Cardiac septum (tissue), 1 donor: ENCODE measurements at regions of chr14 and their contacts with region 1.

Region 1: DNA sequence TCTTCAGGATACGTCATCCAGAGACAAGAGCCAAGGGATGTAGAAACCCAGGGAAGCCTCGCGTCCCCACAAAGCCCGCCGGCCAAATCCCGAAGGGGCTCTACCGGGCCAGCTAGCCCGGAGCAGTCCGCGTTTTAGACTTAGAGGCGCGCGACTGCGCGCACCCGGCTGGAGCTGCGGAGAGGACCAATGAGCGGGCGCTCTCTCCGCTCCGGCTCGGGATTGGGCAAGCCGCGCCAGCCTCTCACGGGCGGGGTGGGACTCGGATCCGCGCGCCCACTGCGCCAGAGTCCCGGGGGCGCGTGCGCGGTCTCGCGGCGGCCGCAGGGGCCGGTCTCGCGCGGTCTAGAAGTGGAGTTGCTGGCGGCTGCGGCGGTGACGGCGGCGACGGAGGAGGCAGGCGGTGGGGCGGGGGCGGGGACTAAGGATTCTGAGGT is 239 bp upstream of the PALS1 start:
- DNase-seq: peak; percentile 97

Region 2: DNA sequence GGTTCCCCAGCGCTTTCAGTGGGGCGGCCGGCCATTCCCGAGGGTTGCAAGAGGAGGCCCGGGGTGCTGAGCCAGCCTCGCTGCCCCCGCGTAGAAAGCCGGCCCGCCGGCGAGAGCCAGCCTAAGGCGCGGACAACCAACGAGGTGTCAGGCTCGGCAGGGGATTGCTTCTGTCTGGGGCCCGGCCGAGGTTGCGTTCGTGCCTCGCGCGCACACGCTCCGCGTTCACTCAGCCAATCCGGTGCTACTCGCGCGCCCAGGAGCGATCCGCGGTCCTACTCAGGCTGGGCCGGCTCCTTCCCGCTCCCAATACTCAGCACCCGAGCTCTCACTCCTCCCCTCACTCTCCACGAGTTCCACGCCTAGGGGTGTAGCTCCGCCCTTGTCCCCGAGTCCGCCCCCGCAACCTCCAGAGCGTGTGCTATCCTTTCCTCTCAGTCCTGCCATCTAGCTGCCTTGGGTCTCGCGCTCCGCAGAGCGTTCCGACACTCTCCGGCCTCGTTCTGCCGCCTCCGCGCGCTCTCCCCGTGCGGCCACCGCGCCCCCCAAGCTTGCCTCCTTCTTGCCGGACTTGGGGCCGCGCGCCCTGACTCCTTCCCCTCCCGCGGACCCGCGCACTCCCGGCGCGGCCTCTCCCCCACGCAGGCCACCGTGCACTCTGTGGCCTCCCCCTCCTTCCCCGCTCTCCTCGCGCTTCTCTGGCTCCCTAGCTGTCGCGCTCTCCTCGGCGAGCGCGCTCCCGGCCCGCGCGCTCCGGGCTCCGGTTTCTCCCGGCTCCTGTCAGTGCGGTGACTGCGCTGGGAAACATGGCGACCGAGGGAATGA is 733.1 kb before region 1 on chr14 and contains the start of gene GPHN:
- intact Hi-C with region 1: loop called (anchors 10 kb)
- DNase-seq: peak; percentile 97
- total RNA-seq, gene GPHN: 27.7 TPM

Region 3: DNA sequence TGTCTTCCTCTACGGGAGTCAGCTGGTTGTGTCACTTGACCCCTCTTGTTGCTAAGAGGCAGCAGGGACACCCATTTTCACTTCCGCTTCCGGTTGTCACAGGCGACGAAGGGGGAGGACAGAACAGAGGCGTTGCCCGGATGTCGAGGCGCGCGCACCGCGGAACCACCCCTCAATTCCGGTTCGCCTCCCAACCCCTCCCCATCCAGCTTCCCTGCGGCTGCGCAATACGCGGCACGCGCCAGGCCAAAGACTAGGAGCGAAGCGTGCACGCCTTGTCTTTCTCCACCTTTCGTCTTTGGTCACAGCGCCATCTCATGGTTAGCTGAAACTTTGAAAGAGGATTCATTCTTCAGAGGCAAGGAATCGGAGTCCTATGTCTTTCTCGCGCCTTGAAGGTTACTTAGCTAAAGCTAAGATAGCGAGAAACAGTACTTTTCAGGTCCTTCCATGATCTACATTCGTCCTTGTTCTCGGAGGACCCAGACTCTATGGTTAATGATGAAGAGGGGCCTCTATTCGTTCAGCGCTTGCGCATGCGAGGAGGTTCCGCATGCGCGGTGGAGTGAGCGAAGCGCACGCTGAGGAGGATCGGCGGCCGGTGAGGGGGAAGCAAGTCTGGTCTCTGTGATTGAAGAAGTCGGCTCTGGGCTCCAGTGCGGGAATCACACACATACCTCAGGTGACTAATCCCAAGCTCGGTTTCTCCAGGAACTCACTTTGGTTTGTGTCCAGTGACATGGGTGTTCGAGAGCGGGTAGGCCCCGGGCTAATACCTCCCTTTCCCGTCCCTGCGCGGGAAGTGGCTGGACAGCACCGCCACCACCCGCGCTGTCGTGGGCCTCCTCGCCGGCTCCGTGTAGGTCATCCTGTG is 119.0 kb after region 1 on chr14 and contains the starts of genes ATP6V1D and EIF2S1:
- intact Hi-C with region 1: loop called (anchors 5 kb)
- DNase-seq: peak; percentile 100
- total RNA-seq, gene ATP6V1D: 178 TPM
- total RNA-seq, gene EIF2S1: 89.8 TPM